AG04450 (cell line): ENCODE measurements at regions of chr14 and their contacts with region 1.

Region 1: GRCh38 chr14:61280526-61281185 is 482 bp downstream of the TMEM30B start:
- DNase-seq: no peak
- H3K4me3 ChIP-seq: peak overlapping the region; percentile 50
- H3K27ac ChIP-seq: no peak overlapping the region
- H3K27me3 ChIP-seq: peaks cover 14% of the 10 kb centered on the region
- CTCF ChIP-seq: peak; percentile 42

Region 2: GRCh38 chr14:60331201-60332045 is 949.2 kb before region 1 on chr14:
- CTCF ChIA-PET with region 1: interaction called, 16 read pairs
- POLR2A ChIA-PET with region 1: no interaction called
- DNase-seq: no peak
- H3K4me3 ChIP-seq: peak overlapping the region; percentile 46
- H3K27ac ChIP-seq: no peak overlapping the region
- H3K27me3 ChIP-seq: peaks cover 18% of the 10 kb centered on the region
- CTCF ChIP-seq: peak; percentile 76

Region 3: DNA sequence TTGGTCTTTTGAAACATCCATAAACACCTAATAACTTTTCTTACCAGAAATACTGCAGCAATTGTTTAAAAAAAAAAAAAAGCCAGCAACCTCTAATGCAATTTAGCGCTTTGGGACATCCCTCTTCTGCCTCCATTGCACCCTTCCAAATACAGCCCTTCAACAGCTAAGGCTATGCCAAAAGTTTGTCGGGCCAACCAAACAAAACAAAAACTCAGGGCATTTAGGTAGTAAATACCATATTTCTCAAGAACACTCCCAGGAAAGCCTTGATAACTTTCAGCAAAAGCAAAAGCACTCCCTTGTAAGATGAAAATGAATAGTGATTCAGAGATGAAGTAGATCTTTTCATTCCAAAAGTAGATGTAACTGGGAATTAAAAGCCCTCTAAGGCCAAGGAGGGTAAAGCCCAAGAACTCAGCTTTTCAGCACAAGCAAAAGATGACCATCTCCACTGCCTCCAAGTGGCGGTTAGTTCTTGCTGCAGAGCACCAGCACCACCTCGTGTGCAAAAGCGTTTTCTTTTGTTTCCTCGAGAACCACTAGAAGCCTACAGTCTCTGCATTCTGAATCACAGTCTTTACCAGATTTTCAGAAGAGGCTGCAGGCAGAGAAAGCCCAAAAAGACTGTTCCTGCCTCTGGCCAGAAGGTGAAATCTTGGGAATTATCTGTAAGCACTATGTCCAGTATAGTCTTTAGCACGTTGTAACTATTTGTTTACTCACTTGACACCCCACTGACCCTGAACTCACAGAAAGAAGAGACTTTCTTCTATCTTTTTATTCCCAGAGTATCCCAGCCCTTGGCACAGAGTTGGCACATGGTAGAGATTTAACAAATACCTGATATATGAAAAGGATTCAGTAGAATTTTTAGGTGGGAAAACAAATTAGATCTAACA is 718.6 kb before region 1 on chr14:
- CTCF ChIA-PET with region 1: interaction called, 12 read pairs
- POLR2A ChIA-PET with region 1: no interaction called
- DNase-seq: peak; percentile 44
- H3K4me3 ChIP-seq: no peak overlapping the region
- H3K27ac ChIP-seq: no peak overlapping the region
- H3K27me3 ChIP-seq: no peaks in the 10 kb centered on the region
- CTCF ChIP-seq: peak; percentile 79

Region 4: GRCh38 chr14:60622917-60623257 is 657.8 kb before region 1 on chr14:
- CTCF ChIA-PET with region 1: interaction called, 15 read pairs
- POLR2A ChIA-PET with region 1: no interaction called
- DNase-seq: peak; percentile 32
- H3K4me3 ChIP-seq: no peak overlapping the region
- H3K27ac ChIP-seq: no peak overlapping the region
- H3K27me3 ChIP-seq: no peaks in the 10 kb centered on the region
- CTCF ChIP-seq: no peak

Region 5: DNA sequence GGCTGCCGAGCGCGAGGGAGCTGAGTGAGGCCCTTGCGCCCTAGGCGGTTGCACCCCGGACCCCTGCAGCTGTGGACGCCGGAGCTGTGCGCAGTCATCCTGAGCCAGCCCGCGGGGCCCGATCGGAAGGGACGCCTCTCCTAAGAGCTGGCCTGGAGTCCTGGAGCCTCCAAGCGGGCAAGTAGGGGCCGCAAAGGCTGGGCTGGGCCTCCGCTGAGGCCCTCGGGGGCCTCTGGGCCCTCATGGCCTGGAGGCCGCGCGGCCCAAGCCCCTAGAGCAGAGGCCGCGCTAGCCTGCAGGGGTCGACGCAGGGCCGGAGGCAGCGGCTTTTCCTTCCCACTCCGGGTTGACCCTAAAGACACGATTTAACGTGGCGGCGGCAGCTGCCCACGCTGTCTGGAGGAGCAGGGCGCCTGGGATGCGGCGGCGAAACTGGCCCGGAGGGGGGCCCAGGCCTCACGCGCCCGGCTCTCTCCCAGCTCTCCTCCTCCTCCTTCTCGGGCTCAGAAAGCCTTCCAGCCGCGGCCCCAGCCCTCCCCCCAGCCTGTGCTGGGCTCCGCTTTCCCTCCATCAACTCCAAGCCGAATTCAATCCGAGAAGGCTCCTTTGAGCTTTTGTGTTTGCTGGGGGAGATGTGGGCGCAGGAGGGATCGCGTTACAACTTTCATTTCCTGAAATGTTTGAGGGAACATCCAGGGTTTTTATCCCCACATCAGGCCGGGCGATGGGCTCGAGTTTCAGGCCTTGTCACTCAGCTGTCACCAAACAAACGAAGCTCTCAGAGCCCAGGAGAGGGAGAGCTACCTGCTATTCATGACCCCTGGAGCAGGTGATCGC is 643.0 kb before region 1 on chr14:
- CTCF ChIA-PET with region 1: interaction called, 10 read pairs
- POLR2A ChIA-PET with region 1: no interaction called
- DNase-seq: no peak
- H3K4me3 ChIP-seq: peak overlapping the region; percentile 14
- H3K27ac ChIP-seq: peak overlapping the region; percentile 59
- H3K27me3 ChIP-seq: no peaks in the 10 kb centered on the region
- CTCF ChIP-seq: no peak

Region 6: GRCh38 chr14:61269321-61270083 is 11.2 kb before region 1 on chr14:
- CTCF ChIA-PET with region 1: interaction called, 61 read pairs
- POLR2A ChIA-PET with region 1: no interaction called
- DNase-seq: no peak
- H3K4me3 ChIP-seq: peak overlapping the region; percentile 62
- H3K27ac ChIP-seq: no peak overlapping the region
- H3K27me3 ChIP-seq: no peaks in the 10 kb centered on the region
- CTCF ChIP-seq: peak; percentile 76

Region 7: GRCh38 chr14:61296719-61297502 is 16.3 kb after region 1 on chr14:
- CTCF ChIA-PET with region 1: interaction called, 14 read pairs
- POLR2A ChIA-PET with region 1: no interaction called
- DNase-seq: no peak
- H3K4me3 ChIP-seq: no peak overlapping the region
- H3K27ac ChIP-seq: no peak overlapping the region
- H3K27me3 ChIP-seq: peaks cover 2% of the 10 kb centered on the region
- CTCF ChIP-seq: peak; percentile 76